ENCODE measurements at regions of chr2 and their contacts with region 1.

Region 1: GRCh38 chr2:85750587-85751575 is 2.9 kb upstream of the ATOH8 start:
- DNase-seq: no peak
- ATAC-seq: peak; percentile 56
- H3K4me3 Mint-ChIP-seq: no peak overlapping the region
- H3K27ac Mint-ChIP-seq: no peak overlapping the region
- H3K4me1 Mint-ChIP-seq: peaks cover 65% of the 10 kb centered on the region
- H3K27me3 Mint-ChIP-seq: peaks cover 19% of the 10 kb centered on the region
- CTCF ChIP-seq: no peak

Region 2: GRCh38 chr2:84800194-84800805 is 950.6 kb before region 1 on chr2:
- CTCF ChIA-PET with region 1: no interaction called
- POLR2A ChIA-PET with region 1: no interaction called
- intact Hi-C with region 1: no loop called
- DNase-seq: no peak
- ATAC-seq: no peak
- H3K4me3 Mint-ChIP-seq: no peak overlapping the region
- H3K27ac Mint-ChIP-seq: no peak overlapping the region
- H3K4me1 Mint-ChIP-seq: no peaks in the 10 kb centered on the region
- H3K27me3 Mint-ChIP-seq: no peaks in the 10 kb centered on the region
- CTCF ChIP-seq: no peak

Region 3: DNA sequence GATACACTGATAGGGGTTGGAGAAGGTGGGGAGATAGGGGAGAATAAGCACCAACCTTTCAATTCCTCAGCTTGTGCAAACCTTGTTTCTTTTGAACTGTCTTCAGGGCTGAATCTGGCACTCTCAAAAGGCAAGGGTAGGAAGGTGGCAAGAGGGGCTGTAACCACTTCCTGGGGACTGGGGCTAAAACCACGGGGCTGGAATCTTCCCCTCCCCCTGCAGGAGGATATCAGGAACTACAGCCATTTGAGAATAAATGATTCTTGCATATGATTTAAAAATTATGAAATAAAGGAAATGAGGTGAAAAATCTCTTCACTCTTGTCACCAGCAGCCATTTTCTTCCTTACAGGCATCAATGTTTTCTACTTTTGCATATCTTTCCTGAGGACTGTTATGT is 53.7 kb after region 1 on chr2:
- CTCF ChIA-PET with region 1: no interaction called
- POLR2A ChIA-PET with region 1: no interaction called
- intact Hi-C with region 1: loop called (anchors 2 kb)
- DNase-seq: no peak
- ATAC-seq: peak; percentile 49
- H3K4me3 Mint-ChIP-seq: no peak overlapping the region
- H3K27ac Mint-ChIP-seq: no peak overlapping the region
- H3K4me1 Mint-ChIP-seq: peaks cover 2% of the 10 kb centered on the region
- H3K27me3 Mint-ChIP-seq: peaks cover 22% of the 10 kb centered on the region
- CTCF ChIP-seq: no peak

Region 4: GRCh38 chr2:86238354-86238753 is 487.5 kb after region 1 on chr2:
- CTCF ChIA-PET with region 1: no interaction called
- POLR2A ChIA-PET with region 1: no interaction called
- intact Hi-C with region 1: no loop called
- DNase-seq: peak; percentile 55
- ATAC-seq: peak; percentile 99
- H3K4me3 Mint-ChIP-seq: peak overlapping the region; percentile 39
- H3K27ac Mint-ChIP-seq: peak overlapping the region; percentile 5
- H3K4me1 Mint-ChIP-seq: peaks cover 57% of the 10 kb centered on the region
- H3K27me3 Mint-ChIP-seq: no peaks in the 10 kb centered on the region
- CTCF ChIP-seq: no peak

Measured in activated B cell treated with CpG ODN at 0.5 μM for 24 hours (primary cell).